Posterior vena cava (tissue), 2 donors: ENCODE measurements at regions of chr10 and their contacts with region 1.

Region 1: GRCh38 chr10:26881600-26882331 is 21.0 kb upstream of the ABI1 start:
- DNase-seq: no peak

Region 2: GRCh38 chr10:26725837-26726727 is 155.7 kb before region 1 on chr10:
- intact Hi-C with region 1: loop called (anchors 5 kb)
- DNase-seq: peak; percentile 91

Region 3: GRCh38 chr10:26914898-26915297 is 33.1 kb after region 1 on chr10:
- intact Hi-C with region 1: no loop called
- DNase-seq: no peak